ENCODE measurements at regions of chr17 and their contacts with region 1.

Region 1: GRCh38 chr17:49031965-49032928 is 35.1 kb downstream of the IGF2BP1 start:
- DNase-seq: peak; percentile 88
- H3K4me3 ChIP-seq: peak overlapping the region in 1 of 2 experiments; percentile 28; a peak in 1 of 4 replicates
- H3K27ac ChIP-seq: no peak overlapping the region
- H3K4me1 ChIP-seq: peaks cover 0 to 6% of the 10 kb centered on the region in 2 experiments; a peak in 1 of 4 replicates
- H3K27me3 ChIP-seq: peaks cover 34% of the 10 kb centered on the region; the same call in 1 of the 2 replicates
- CTCF ChIP-seq: peak; percentile 95
- EP300 ChIP-seq: no peak
- RAD21 ChIP-seq: peak; percentile 98

Region 2: GRCh38 chr17:48671697-48672171 is 360.5 kb before region 1 on chr17:
- CTCF ChIA-PET with region 1: interaction called, 15 read pairs
- POLR2A ChIA-PET with region 1: no interaction called
- DNase-seq: peak; percentile 76
- H3K4me3 ChIP-seq: peak overlapping the region; percentile 35 to 62; a peak in 3 of 4 replicates
- H3K27ac ChIP-seq: no peak overlapping the region
- H3K4me1 ChIP-seq: no peaks in the 10 kb centered on the region
- H3K27me3 ChIP-seq: peaks cover 79% of the 10 kb centered on the region
- CTCF ChIP-seq: peak; percentile 99
- EP300 ChIP-seq: no peak
- RAD21 ChIP-seq: peak; percentile 86

Region 3: DNA sequence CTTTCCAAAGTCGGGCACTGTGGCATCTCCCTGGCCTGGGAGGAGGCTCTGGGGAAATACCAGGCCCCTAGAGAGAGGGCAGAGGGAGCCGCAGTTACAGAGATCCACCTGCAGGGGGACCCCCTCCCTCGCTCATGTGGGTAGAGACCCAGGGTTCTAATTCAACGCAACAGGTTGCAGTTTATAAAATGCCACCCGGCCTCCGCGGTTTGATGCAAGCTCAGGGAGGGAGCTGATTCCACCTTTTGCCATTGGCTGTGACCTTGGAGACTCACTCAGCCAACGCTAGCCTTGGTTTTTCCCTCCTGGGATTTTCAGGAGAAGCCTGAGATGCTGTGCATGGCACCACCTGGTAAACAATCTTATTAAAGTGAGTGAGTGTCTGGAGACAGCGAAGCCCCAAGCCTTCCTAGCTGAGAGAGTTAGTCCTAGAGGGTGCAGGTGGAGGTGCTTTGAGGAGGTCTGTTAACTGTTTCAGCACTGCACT is 227.3 kb before region 1 on chr17:
- CTCF ChIA-PET with region 1: interaction called, 25 read pairs
- POLR2A ChIA-PET with region 1: no interaction called
- DNase-seq: peak; percentile 88
- H3K4me3 ChIP-seq: peak overlapping the region in 1 of 2 experiments; percentile 15; a peak in 1 of 4 replicates
- H3K27ac ChIP-seq: no peak overlapping the region
- H3K4me1 ChIP-seq: peaks cover 0 to 18% of the 10 kb centered on the region in 2 experiments; a peak in 2 of 4 replicates
- H3K27me3 ChIP-seq: peaks cover 29% of the 10 kb centered on the region
- CTCF ChIP-seq: peak; percentile 99
- EP300 ChIP-seq: no peak
- RAD21 ChIP-seq: peak; percentile 95

Region 4: GRCh38 chr17:48990882-48991357 is 41.3 kb before region 1 on chr17:
- CTCF ChIA-PET with region 1: interaction called, 35 read pairs
- POLR2A ChIA-PET with region 1: no interaction called
- DNase-seq: no peak
- H3K4me3 ChIP-seq: no peak overlapping the region
- H3K27ac ChIP-seq: no peak overlapping the region
- H3K4me1 ChIP-seq: no peaks in the 10 kb centered on the region; a peak in 1 of 4 replicates
- H3K27me3 ChIP-seq: peaks cover 84% of the 10 kb centered on the region
- CTCF ChIP-seq: no peak
- EP300 ChIP-seq: no peak
- RAD21 ChIP-seq: no peak

Region 5: DNA sequence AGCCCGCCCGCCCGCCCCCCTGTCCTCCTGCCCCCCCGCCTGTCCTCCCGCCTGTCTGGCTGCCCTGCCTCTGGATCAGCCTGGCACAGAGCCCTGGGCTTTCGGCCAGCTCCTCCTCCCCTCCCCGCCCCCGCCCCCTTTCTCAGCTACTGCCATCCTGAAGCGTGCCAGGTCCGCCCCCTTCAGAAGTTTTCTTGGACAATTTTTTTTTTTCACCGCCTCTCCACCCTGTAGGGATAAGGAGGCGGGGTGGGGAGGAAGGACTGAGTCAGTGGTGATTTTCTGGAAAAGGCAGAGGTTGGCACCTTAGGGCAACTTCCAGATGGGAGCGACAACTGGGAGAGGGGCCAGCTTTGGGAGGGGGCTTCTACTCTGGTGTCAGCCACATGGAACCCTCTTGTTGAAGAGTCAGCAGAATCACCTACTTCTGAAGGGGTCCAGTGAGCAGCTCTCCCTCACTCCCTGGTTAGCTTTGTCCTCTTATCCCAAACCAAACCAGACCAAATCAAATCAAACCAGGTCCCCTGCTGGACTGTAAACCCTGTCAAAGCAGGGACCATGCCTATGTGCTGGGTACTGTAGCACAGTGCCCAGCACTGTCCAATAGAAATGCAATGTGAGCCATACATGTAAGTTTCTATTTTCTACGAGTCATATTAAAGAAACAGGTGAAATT is 15.3 kb before region 1 on chr17:
- CTCF ChIA-PET with region 1: interaction called, 88 read pairs
- POLR2A ChIA-PET with region 1: no interaction called
- DNase-seq: peak; percentile 73
- H3K4me3 ChIP-seq: no peak overlapping the region
- H3K27ac ChIP-seq: no peak overlapping the region
- H3K4me1 ChIP-seq: peaks cover 0 to 10% of the 10 kb centered on the region in 2 experiments; a peak in 2 of 4 replicates
- H3K27me3 ChIP-seq: peaks cover 89% of the 10 kb centered on the region
- CTCF ChIP-seq: no peak
- EP300 ChIP-seq: no peak
- RAD21 ChIP-seq: no peak

Region 6: DNA sequence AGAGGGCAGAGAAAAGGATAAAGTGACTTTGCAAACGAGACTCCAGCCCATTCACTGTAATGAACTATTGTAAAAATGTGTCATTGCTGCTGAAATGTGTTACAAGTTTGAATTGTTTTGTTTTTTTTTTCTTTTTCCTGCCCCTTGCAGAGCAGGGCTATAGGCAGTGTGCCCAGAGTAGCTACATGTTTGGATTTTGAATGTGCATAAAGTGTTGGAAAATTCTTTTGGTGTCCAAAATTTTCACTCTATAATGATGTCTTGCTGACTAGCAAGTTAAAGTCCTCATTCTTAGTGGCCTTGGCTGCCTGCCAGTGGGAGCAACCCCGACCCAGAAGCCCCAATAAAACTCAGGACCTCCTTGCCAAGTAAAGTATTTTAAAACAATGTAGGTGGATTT is 31.4 kb after region 1 on chr17:
- CTCF ChIA-PET with region 1: interaction called, 10 read pairs
- POLR2A ChIA-PET with region 1: no interaction called
- DNase-seq: no peak
- H3K4me3 ChIP-seq: no peak overlapping the region
- H3K27ac ChIP-seq: no peak overlapping the region
- H3K4me1 ChIP-seq: no peaks in the 10 kb centered on the region
- H3K27me3 ChIP-seq: peaks cover 96% of the 10 kb centered on the region
- CTCF ChIP-seq: no peak
- EP300 ChIP-seq: no peak
- RAD21 ChIP-seq: no peak